HCT116 (cell line): ENCODE measurements at regions of chr21 and their contacts with region 1.

Region 1: DNA sequence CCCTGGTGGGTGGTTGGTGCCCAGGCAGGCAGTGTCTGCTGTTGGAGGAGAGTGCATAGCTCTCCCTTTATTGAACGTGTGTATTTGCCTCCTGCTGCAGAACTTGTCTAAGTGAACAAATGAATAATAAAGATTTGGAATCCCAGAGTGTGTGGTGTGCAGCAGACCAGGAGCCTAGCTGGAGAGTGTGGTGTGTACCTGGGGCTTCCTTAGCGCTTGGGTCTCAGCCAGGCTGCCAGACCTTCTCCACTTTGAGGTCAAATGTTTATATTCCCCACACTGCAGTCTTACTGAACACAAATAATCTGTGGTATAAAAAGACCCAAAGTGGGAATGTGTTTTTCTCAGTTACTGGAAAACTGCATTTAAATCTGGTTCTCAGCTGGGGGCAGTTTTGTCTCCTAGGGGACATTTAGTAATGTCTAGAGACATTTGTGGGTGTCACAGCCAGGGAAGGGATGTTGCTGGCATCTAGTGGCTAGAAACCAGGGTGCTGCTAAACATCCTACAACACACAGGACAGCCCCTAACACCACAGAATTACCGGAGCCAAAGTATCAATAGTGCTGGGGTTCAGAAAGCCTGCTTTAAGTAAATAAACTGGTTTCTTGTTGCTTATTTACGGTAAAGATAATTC is 23.6 kb downstream of the SLC37A1 start:
- DNase-seq: no peak
- ATAC-seq: peak; percentile 73
- H3K4me3 ChIP-seq: no peak overlapping the region
- H3K27ac ChIP-seq: no peak overlapping the region
- H3K4me1 ChIP-seq: no peaks in the 10 kb centered on the region
- H3K27me3 ChIP-seq: no peaks in the 10 kb centered on the region
- CTCF ChIP-seq: peak; percentile 31 to 53 (median 46); a peak in 5 of 6 replicates
- POLR2A ChIP-seq: no peak
- RAD21 ChIP-seq: peak; percentile 67

Region 2: DNA sequence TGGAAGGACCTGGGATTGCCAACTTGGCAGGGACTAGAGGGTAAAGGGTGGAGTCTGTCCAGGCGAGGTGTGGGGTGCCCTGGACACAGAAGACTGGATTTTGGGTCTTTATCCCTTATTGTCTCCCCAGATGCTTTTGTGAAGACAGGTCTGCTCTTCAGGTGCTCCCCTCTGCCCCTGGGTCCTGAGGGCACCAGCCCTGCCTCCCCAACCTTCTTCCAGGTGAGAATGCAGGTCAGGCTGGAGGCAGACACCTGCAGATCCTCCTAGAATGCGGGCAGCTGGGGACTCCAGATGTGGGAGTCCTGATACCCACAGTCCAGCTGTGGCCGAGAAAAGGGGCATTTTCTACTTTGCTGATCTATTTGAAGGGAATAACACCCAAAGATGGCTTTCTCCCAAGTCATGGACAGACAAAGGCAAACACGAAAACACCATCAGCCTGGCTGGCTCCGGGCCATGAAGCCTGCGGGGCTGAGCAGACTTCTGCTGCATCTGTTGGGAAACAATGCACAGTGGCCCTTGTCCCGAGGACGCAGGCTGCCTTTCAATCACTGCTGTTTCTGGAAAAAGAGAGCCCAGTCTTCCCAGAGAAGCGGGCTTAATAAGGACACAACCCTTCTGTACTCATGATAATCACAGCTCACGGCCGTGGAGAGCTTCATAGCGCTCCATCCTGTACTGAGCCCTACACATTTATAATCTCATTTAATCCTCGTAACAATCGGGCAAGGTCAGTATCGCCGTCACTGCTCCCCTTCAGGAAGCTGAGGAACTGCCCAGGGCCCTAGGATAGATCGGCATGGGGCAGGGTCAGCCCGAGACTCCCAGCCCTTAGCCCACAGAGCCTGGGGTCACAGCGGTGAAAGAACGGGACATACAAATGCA is 380.3 kb before region 1 on chr21:
- CTCF ChIA-PET with region 1: no interaction called
- POLR2A ChIA-PET with region 1: no interaction called
- RAD21 ChIA-PET with region 1: no interaction called
- intact Hi-C with region 1: loop called (anchors 10 kb)
- DNase-seq: no peak
- ATAC-seq: no peak
- H3K4me3 ChIP-seq: no peak overlapping the region
- H3K27ac ChIP-seq: no peak overlapping the region
- H3K4me1 ChIP-seq: peaks cover 0 to 6% of the 10 kb centered on the region in 2 experiments; a peak in 2 of 4 replicates
- H3K27me3 ChIP-seq: no peaks in the 10 kb centered on the region
- CTCF ChIP-seq: no peak
- POLR2A ChIP-seq: no peak
- RAD21 ChIP-seq: no peak

Region 3: DNA sequence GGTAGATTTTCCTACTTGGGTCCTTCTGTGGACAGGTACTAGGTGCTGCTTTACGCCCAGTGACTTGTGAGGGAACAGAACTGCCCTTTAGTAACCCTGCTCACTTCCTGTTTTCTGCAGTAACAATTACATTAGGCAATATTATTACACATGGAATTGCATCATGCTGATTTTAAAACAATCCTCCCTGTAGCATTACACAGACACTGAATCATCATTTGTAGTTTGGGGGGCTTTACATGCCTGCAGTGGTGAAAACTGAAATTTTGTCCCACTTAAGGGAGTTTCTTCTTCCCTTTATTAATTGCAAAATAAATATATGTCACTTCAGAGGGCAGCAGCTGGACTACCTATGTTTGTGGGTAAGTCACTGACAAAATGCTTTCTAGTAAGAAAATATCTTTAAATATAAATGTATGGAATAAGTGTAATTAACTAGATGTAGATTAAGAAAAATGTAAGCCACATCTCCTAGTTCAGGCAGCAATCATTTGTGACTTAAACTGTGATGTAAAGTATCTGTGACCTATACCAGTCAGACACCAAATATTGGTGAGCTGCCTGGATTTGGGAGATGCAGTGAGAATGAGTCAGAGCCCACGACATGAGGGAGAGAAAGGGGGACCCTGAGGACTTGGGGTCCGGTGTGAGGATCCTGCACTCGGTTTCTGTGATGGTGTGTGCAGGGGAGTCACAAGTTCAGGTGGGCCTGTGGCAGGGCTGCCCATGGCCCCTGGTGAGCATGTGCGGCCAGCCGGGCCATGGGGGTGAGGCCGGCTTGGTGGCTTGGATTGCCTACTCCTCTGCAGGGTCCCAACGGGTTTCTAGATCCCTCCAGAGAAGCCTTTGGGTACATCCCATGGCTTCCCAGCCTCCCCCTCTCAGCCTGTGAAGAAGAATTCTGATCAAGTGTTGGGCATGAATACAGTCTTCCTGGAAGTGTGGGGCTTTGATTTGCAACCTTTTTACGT is 337.5 kb before region 1 on chr21:
- CTCF ChIA-PET with region 1: no interaction called
- POLR2A ChIA-PET with region 1: no interaction called
- RAD21 ChIA-PET with region 1: no interaction called
- intact Hi-C with region 1: no loop called
- DNase-seq: no peak
- ATAC-seq: no peak
- H3K4me3 ChIP-seq: no peak overlapping the region
- H3K27ac ChIP-seq: no peak overlapping the region
- H3K4me1 ChIP-seq: peaks cover 7 to 9% of the 10 kb centered on the region in 2 experiments; a peak in 3 of 4 replicates
- H3K27me3 ChIP-seq: no peaks in the 10 kb centered on the region
- CTCF ChIP-seq: no peak
- POLR2A ChIP-seq: no peak
- RAD21 ChIP-seq: no peak; the same call in 1 of the 2 replicates

Region 4: DNA sequence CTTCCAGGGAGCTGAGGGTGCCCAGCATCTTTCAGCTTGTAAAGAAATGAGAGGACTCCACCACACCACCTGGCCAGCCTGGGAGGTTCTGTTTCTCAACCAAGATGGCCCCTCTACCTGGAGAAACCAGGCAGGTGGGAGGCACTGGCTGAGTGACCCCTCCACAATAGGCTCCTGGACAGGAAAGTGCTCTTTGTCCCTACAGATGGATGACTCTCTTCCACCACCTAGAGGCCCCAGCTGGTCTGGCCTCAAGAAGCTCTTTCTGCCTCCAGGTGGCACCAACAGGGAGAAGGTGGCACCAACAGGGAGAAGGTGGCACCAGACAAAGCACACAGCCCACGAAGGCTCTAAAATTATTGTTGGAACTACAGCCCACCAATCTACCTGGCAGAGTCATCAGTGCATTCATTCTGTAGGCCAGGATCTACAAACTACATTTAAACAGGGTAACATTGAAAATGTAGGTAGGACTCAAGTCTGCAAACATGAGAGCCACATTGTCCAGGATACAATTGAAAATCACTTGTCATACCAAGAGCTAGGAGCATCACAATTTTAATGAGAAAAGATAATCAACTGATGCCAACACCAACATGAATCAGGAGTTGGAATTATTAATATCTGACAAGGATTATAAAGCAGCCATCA is 155.8 kb before region 1 on chr21:
- CTCF ChIA-PET with region 1: interaction called, 4 read pairs
- POLR2A ChIA-PET with region 1: no interaction called
- RAD21 ChIA-PET with region 1: no interaction called
- intact Hi-C with region 1: loop called (anchors 10 kb)
- DNase-seq: peak; percentile 59
- ATAC-seq: peak; percentile 98
- H3K4me3 ChIP-seq: no peak overlapping the region
- H3K27ac ChIP-seq: no peak overlapping the region
- H3K4me1 ChIP-seq: peaks cover 0 to 3% of the 10 kb centered on the region in 2 experiments; a peak in 1 of 4 replicates
- H3K27me3 ChIP-seq: no peaks in the 10 kb centered on the region
- CTCF ChIP-seq: peak; percentile 95 to 99 (median 99)
- POLR2A ChIP-seq: no peak
- RAD21 ChIP-seq: peak; percentile 80

Region 5: DNA sequence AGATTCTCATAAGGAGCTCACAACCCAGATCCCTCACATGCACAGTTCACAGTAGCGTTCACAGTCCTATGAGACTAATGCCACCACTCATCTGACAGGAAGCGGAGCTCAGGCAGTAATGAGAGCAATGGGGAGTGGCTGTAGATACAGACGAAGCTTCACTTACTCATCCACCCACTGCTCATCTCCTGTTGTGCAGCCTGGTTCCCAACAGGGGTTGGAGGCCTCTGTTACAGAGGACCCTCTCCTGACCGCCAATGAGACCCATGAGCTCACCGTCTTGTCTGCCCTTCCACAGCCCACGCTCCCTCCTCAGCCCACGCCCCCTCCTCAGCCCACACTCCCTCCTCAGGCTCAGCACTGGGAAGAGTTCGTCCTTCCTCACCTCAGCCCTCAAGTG is 80.8 kb before region 1 on chr21:
- CTCF ChIA-PET with region 1: no interaction called
- POLR2A ChIA-PET with region 1: no interaction called
- RAD21 ChIA-PET with region 1: no interaction called
- intact Hi-C with region 1: loop called (anchors 5 kb)
- DNase-seq: no peak
- ATAC-seq: no peak
- H3K4me3 ChIP-seq: no peak overlapping the region
- H3K27ac ChIP-seq: no peak overlapping the region
- H3K4me1 ChIP-seq: no peaks in the 10 kb centered on the region; a peak in 1 of 4 replicates
- H3K27me3 ChIP-seq: no peaks in the 10 kb centered on the region
- CTCF ChIP-seq: no peak
- POLR2A ChIP-seq: no peak
- RAD21 ChIP-seq: no peak

Region 6: DNA sequence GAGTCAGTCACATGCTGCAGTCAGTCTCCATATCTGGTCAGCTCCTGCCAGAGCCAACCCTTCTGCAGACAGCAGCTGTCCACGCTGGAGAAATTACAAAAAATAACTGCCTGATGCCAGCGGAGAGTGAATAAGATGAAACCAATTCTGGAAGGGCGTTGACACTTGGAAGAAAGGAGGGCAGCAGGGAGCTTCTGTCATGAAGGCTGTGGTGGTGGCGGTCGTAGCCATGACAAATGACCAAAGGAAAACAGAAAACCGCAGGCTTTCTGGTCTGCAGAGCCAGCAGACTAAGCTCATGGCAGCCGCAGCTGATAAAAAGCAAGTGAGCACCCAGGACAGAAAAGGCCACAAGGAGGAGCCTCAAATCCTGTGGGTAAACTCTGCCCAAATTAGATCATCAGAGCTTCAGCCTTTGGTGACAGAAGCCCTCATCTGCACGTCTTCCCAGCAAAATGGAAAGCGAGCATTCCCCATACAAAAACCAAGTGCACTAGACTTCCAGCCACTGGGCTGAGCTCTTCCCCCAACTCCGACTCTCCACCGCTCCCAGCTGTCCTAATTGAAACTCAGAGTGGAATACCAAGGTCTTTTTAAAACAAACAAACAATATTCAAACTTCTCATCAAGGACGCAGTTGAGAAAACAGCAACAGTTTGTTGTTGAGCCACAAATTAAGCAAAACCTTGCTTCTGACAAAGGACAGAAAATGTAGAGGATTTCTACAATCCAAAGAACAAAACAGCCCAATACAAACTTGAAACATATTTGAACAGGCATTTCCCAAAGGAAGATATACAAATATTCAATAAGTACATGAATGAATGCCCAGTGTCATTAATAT is 69.9 kb before region 1 on chr21:
- CTCF ChIA-PET with region 1: interaction called, 10 read pairs
- POLR2A ChIA-PET with region 1: interaction called, 3 read pairs
- RAD21 ChIA-PET with region 1: interaction called in 1 of 2 experiments, 4 read pairs
- intact Hi-C with region 1: loop called (anchors 2 kb)
- DNase-seq: peak; percentile 23
- ATAC-seq: peak; percentile 65
- H3K4me3 ChIP-seq: no peak overlapping the region
- H3K27ac ChIP-seq: no peak overlapping the region
- H3K4me1 ChIP-seq: peaks cover 3 to 15% of the 10 kb centered on the region in 2 experiments; a peak in 1 of 4 replicates
- H3K27me3 ChIP-seq: no peaks in the 10 kb centered on the region
- CTCF ChIP-seq: peak; percentile 31 to 37 (median 36); a peak in 3 of 6 replicates
- POLR2A ChIP-seq: no peak
- RAD21 ChIP-seq: peak; percentile 64

Region 7: GRCh38 chr21:42833439-42833815 is 296.2 kb after region 1 on chr21:
- CTCF ChIA-PET with region 1: no interaction called
- POLR2A ChIA-PET with region 1: no interaction called
- RAD21 ChIA-PET with region 1: no interaction called
- intact Hi-C with region 1: no loop called
- DNase-seq: peak; percentile 10
- ATAC-seq: peak; percentile 73
- H3K4me3 ChIP-seq: no peak overlapping the region
- H3K27ac ChIP-seq: no peak overlapping the region
- H3K4me1 ChIP-seq: peaks cover 0 to 10% of the 10 kb centered on the region in 2 experiments; a peak in 1 of 4 replicates
- H3K27me3 ChIP-seq: no peaks in the 10 kb centered on the region
- CTCF ChIP-seq: peak; percentile 50 to 53 (median 51); a peak in 5 of 6 replicates
- POLR2A ChIP-seq: no peak
- RAD21 ChIP-seq: peak; percentile 27; the same call in 1 of the 2 replicates